IMR-90 (cell line): ENCODE measurements at regions of chr7 and their contacts with region 1.

Region 1: DNA sequence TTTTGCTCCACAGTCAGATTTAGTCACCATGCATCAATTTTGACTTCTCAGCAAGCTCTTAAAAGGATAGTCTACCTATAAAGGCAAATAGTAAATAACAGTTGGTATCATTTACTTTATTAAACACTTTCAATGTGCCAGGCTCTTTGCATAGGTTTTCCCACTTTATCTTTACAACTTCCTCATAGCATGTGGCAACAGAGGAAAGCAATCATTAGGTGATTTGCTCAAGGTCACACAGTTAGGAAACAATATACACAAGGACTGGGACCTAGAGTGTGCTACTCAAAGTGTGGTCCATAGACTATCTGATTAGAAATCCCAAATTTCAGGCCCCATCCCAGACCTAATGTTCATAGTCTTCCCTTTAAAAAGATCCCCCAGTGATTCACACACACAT is 212.3 kb downstream of the MTERF1 start:
- DNase-seq: no peak
- ATAC-seq: no peak
- H3K4me3 ChIP-seq: no peak overlapping the region
- H3K27ac ChIP-seq: no peak overlapping the region
- H3K4me1 ChIP-seq: no peaks in the 10 kb centered on the region
- H3K27me3 ChIP-seq: no peaks in the 10 kb centered on the region
- CTCF ChIP-seq: no peak
- POLR2A ChIP-seq: no peak
- RAD21 ChIP-seq: no peak

Region 2: DNA sequence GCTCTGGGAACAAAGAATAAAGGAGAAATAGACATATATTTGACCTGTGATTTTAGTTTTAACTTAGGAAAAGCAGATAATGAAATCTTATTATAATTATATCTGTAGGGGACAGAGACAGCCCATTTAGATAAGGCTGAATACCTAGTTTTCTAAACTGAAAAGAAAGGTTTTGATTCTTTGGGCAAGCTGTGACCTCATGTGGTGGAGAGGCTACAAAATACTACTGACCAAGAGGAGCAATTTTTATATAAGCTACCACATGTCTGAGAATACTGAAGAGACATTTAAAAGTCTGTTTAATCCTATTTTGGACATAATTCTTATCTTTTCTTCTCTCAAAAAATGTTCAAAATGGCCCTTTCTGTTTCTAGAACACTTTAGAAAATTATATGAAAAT is 58.7 kb before region 1 on chr7:
- CTCF ChIA-PET with region 1: no interaction called
- POLR2A ChIA-PET with region 1: no interaction called
- dilution Hi-C with region 1: no loop called
- in situ Hi-C with region 1: no loop called
- intact Hi-C with region 1: loop called (anchors 5 kb)
- DNase-seq: no peak
- ATAC-seq: no peak
- H3K4me3 ChIP-seq: no peak overlapping the region
- H3K27ac ChIP-seq: no peak overlapping the region
- H3K4me1 ChIP-seq: no peaks in the 10 kb centered on the region
- H3K27me3 ChIP-seq: no peaks in the 10 kb centered on the region; the same call in 1 of the 2 replicates
- CTCF ChIP-seq: no peak
- POLR2A ChIP-seq: no peak
- RAD21 ChIP-seq: no peak

Region 3: DNA sequence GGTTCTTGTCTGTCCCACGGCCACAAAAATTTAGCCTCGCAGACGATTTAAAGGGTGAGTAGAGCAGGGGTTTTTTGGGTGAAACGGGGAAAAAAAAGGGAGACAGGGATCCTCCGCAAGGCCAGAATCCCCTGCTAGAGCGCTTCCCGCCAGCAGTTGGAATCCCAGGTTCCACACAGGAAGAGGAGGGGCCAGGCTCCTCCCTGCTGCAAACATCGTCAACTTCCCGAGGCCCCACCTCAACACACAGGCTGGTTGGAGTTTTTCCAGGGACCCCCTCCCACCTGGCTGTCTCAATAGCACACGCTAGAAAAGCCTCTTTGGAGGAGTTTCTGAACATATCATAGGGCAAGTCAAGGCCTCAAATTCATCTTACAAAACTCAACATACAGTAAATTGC is 99.6 kb after region 1 on chr7:
- CTCF ChIA-PET with region 1: no interaction called
- POLR2A ChIA-PET with region 1: no interaction called
- dilution Hi-C with region 1: no loop called
- in situ Hi-C with region 1: no loop called
- intact Hi-C with region 1: no loop called
- DNase-seq: no peak
- ATAC-seq: no peak
- H3K4me3 ChIP-seq: no peak overlapping the region
- H3K27ac ChIP-seq: no peak overlapping the region
- H3K4me1 ChIP-seq: no peaks in the 10 kb centered on the region
- H3K27me3 ChIP-seq: no peaks in the 10 kb centered on the region
- CTCF ChIP-seq: no peak
- POLR2A ChIP-seq: no peak
- RAD21 ChIP-seq: no peak